IMR-90 (cell line): ENCODE measurements at regions of chr14 and their contacts with region 1.

Region 1: DNA sequence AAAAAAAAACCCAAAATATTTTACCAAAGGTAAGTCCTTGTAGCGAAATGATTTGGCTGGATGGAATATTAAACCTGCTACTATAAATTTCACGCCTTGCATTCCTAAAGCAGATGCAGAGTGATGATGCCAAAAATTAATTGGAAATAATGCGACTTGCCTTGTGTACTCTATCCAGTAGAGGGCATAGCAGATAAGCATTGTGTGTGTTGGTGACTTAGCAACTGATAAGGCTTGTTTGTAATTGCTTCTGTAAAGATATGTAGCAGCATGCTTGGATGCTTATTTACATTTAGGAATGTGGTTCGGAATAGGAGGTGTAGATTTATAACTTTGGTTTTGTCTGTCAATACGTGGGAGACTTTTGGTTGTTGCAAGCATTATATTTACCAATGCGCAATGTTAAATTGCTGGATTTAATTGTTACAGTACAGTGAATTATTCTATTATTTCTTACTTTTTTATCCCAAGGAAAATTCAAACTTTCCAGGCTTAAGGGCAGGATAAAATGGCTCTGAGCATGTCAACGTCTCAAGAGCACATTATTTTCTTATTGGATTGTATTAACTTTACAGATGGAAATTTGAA is 80.5 kb downstream of the TMEM260 start:
- DNase-seq: peak; percentile 62
- ATAC-seq: peak; percentile 92
- H3K4me3 ChIP-seq: no peak overlapping the region
- H3K27ac ChIP-seq: no peak overlapping the region
- H3K4me1 ChIP-seq: no peaks in the 10 kb centered on the region
- H3K27me3 ChIP-seq: peaks cover 2% of the 10 kb centered on the region; the same call in 1 of the 2 replicates
- CTCF ChIP-seq: peak; percentile 79
- POLR2A ChIP-seq: no peak
- RAD21 ChIP-seq: peak; percentile 70

Region 2: GRCh38 chr14:56590535-56590960 is 69.5 kb before region 1 on chr14:
- CTCF ChIA-PET with region 1: no interaction called
- POLR2A ChIA-PET with region 1: no interaction called
- dilution Hi-C with region 1: no loop called
- in situ Hi-C with region 1: no loop called
- intact Hi-C with region 1: no loop called
- DNase-seq: no peak
- ATAC-seq: no peak
- H3K4me3 ChIP-seq: no peak overlapping the region
- H3K27ac ChIP-seq: no peak overlapping the region
- H3K4me1 ChIP-seq: no peaks in the 10 kb centered on the region
- H3K27me3 ChIP-seq: no peaks in the 10 kb centered on the region
- CTCF ChIP-seq: no peak
- POLR2A ChIP-seq: no peak
- RAD21 ChIP-seq: no peak

Region 3: DNA sequence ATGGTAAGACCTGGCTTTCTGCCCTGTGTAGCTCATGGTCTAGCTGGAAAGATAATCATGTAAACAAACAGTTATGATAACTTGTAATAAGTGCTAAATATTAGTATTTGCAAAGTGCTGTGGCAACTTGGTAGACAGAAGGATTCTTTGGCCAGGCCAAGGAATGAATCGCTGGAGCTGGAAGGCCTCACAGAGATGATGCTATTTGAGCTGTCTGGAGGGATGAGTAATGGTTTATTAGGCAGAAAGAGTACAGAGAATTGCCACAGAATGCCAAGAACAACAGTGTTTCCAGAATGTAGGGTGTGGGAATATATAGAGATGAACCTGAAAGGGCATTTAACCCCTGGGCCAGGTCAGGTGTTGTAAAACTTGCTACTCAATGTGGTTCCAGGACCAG is 122.6 kb after region 1 on chr14:
- CTCF ChIA-PET with region 1: no interaction called
- POLR2A ChIA-PET with region 1: no interaction called
- dilution Hi-C with region 1: no loop called
- in situ Hi-C with region 1: no loop called
- intact Hi-C with region 1: no loop called
- DNase-seq: no peak
- ATAC-seq: no peak
- H3K4me3 ChIP-seq: no peak overlapping the region
- H3K27ac ChIP-seq: no peak overlapping the region
- H3K4me1 ChIP-seq: no peaks in the 10 kb centered on the region
- H3K27me3 ChIP-seq: no peaks in the 10 kb centered on the region
- CTCF ChIP-seq: no peak
- POLR2A ChIP-seq: no peak
- RAD21 ChIP-seq: no peak

Region 4: GRCh38 chr14:56855891-56856461 is 195.9 kb after region 1 on chr14:
- CTCF ChIA-PET with region 1: no interaction called
- POLR2A ChIA-PET with region 1: no interaction called
- dilution Hi-C with region 1: no loop called
- in situ Hi-C with region 1: no loop called
- intact Hi-C with region 1: no loop called
- DNase-seq: no peak
- ATAC-seq: no peak
- H3K4me3 ChIP-seq: no peak overlapping the region
- H3K27ac ChIP-seq: no peak overlapping the region
- H3K4me1 ChIP-seq: no peaks in the 10 kb centered on the region
- H3K27me3 ChIP-seq: no peaks in the 10 kb centered on the region
- CTCF ChIP-seq: no peak
- POLR2A ChIP-seq: no peak
- RAD21 ChIP-seq: no peak

Region 5: DNA sequence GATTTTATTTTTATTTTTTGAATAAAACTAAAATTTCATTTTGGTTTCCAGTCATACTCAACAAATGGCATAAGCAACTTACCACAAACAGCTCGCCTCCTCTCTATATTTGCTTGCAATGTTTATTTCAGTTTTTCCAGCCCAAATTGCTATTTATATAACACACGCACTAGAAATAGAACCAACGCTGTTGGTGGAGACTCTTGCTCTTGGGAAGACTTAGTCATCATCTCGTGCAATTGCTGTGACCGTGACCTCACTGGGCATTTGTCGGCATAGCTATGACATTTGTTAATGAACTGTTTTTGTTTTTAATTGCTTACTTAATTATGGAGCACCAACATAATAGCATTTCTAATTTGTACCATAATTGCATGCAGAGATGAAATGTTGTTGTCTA is 303.3 kb after region 1 on chr14:
- CTCF ChIA-PET with region 1: no interaction called
- POLR2A ChIA-PET with region 1: no interaction called
- dilution Hi-C with region 1: no loop called
- in situ Hi-C with region 1: no loop called
- intact Hi-C with region 1: no loop called
- DNase-seq: no peak
- ATAC-seq: no peak
- H3K4me3 ChIP-seq: no peak overlapping the region
- H3K27ac ChIP-seq: no peak overlapping the region
- H3K4me1 ChIP-seq: no peaks in the 10 kb centered on the region
- H3K27me3 ChIP-seq: no peaks in the 10 kb centered on the region
- CTCF ChIP-seq: no peak
- POLR2A ChIP-seq: no peak
- RAD21 ChIP-seq: no peak

Region 6: DNA sequence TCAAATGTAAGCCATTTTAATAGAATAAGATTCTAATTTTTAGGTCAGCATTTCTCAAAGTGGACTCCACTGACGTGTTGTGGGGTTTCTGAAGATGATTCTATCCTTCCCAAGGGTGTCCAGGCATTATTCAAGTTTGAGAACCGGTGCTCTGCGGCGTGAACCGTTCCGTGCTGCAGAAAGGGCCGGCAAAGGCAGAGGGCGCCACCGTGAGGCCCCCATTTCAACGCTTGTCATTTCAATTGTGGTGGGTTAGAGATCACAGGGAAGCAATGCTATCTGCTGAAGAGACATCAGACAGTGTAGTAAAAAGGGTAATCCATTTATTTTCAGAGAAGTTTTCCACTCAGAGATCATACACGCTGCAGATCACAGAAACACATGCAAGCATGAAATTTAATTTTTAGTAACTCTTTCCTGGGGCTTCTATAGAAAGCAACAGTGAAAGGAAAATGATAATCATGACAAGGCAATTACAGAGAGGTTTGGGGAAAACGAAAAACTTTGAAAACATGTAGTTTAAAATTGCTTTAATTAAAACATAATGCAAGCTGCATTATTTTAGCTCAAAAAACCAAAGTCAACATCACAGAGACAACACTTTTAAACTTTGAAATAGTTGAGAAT is 406.9 kb after region 1 on chr14:
- CTCF ChIA-PET with region 1: no interaction called
- POLR2A ChIA-PET with region 1: no interaction called
- dilution Hi-C with region 1: no loop called
- in situ Hi-C with region 1: no loop called
- intact Hi-C with region 1: loop called (anchors 10 kb)
- DNase-seq: peak; percentile 2
- ATAC-seq: peak; percentile 60
- H3K4me3 ChIP-seq: no peak overlapping the region
- H3K27ac ChIP-seq: no peak overlapping the region
- H3K4me1 ChIP-seq: no peaks in the 10 kb centered on the region
- H3K27me3 ChIP-seq: peaks cover 1% of the 10 kb centered on the region; the same call in 1 of the 2 replicates
- CTCF ChIP-seq: peak; percentile 44
- POLR2A ChIP-seq: no peak
- RAD21 ChIP-seq: peak; percentile 51

Region 7: DNA sequence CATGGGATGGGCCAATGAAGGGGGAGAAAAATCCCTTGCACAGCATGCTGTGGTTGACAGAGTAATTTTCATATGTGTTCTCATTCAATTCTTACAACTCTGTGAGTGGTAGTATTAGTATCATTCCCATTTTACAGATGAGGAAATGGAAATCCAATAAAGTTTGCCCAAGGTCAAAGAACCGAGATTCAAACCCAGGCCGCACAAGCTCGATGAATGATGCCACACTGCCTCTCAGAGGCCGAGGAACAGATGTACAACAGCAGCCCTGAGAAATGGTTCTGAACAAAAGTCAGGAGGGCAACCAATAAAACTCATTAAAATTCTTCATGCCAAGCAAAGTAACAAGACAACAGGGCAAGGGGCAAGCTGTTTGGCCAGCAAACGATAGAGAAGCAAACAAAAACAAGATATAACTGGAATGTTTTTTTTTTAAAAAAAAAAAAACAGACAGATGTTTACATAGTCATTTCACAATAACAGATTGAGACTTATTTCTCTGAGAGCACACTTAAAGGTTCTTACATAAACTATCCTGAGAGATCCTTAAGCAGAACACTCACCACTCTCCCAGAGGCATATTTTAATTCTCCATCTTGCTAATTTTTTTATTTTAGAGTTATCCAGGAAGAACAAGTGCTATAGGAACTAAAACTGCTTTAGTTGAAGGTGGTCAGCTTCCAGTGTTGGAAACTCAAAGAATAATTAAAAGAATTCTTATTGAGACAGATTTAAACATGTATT is 522.9 kb after region 1 on chr14:
- CTCF ChIA-PET with region 1: no interaction called
- POLR2A ChIA-PET with region 1: no interaction called
- dilution Hi-C with region 1: no loop called
- in situ Hi-C with region 1: no loop called
- intact Hi-C with region 1: loop called (anchors 2 kb)
- DNase-seq: peak; percentile 2
- ATAC-seq: peak; percentile 49; the same call in 1 of the 2 replicates
- H3K4me3 ChIP-seq: no peak overlapping the region
- H3K27ac ChIP-seq: no peak overlapping the region
- H3K4me1 ChIP-seq: no peaks in the 10 kb centered on the region
- H3K27me3 ChIP-seq: peaks cover 14% of the 10 kb centered on the region
- CTCF ChIP-seq: peak; percentile 31
- POLR2A ChIP-seq: no peak
- RAD21 ChIP-seq: peak; percentile 38; the same call in 1 of the 2 replicates

Region 8: DNA sequence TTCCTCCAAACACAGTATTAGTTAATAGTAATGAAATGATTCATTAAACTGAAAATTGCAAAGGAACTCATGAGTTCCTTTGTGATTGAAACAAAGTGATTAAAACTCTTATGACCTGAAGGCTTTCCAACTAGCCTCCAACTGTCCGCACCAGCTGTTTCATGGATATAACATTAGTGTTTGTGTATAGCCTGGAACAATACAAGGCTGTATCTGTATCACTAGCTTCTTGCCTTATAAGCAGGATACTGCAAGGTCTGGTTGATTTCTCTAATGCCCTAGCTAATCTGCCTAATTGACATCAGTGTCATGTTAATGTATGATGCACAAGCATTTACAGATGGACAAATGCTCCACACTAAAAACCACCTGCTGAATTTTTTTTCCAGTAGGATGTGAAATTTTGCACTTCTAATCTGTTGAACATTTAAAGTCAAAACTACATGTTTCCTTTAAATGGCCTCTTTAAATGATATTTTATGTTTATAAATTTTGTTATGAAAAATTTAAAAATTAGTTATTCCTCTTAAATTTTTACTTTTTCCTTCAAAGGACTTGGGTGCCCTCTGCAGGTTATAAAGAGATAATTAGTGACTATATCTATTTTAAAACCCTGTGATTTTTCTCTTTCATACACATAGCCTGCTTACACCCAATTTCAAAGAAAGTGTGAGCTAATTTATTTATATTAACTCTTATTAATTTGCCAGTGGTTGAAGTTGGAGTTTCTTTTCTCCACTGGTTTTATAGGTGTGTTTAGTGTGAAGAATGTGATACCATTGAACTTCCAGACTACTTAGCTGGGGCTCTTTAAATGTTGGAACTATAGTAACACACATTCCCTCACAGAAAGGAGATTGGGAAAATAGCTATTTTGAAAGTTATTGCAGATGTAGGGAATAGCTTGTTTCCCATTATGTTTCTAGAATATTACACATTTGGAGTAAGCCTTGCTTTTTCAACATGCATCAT is 634.1 kb after region 1 on chr14:
- CTCF ChIA-PET with region 1: interaction called, 3 read pairs
- POLR2A ChIA-PET with region 1: no interaction called
- dilution Hi-C with region 1: no loop called
- in situ Hi-C with region 1: no loop called
- intact Hi-C with region 1: loop called (anchors 1 kb)
- DNase-seq: peak; percentile 35
- ATAC-seq: peak; percentile 68; the same call in 1 of the 2 replicates
- H3K4me3 ChIP-seq: no peak overlapping the region
- H3K27ac ChIP-seq: no peak overlapping the region
- H3K4me1 ChIP-seq: no peaks in the 10 kb centered on the region
- H3K27me3 ChIP-seq: no peaks in the 10 kb centered on the region
- CTCF ChIP-seq: peak; percentile 49
- POLR2A ChIP-seq: no peak
- RAD21 ChIP-seq: peak; percentile 41

Region 9: GRCh38 chr14:57317316-57317715 is 657.3 kb after region 1 on chr14:
- CTCF ChIA-PET with region 1: no interaction called
- POLR2A ChIA-PET with region 1: no interaction called
- dilution Hi-C with region 1: no loop called
- in situ Hi-C with region 1: loop called (anchors 25 kb)
- intact Hi-C with region 1: loop called (anchors 1 kb)
- DNase-seq: peak; percentile 78
- ATAC-seq: peak; percentile 85
- H3K4me3 ChIP-seq: no peak overlapping the region
- H3K27ac ChIP-seq: no peak overlapping the region
- H3K4me1 ChIP-seq: no peaks in the 10 kb centered on the region
- H3K27me3 ChIP-seq: peaks cover 7% of the 10 kb centered on the region
- CTCF ChIP-seq: peak; percentile 93
- POLR2A ChIP-seq: no peak
- RAD21 ChIP-seq: peak; percentile 85